ENCODE measurements at regions of chr1 and their contacts with region 1.

Region 1: GRCh38 chr1:94061513-94062443 is 59.2 kb downstream of the ABCA4 start:
- DNase-seq: peak; percentile 51
- H3K4me3 Mint-ChIP-seq: no peak overlapping the region
- H3K27ac Mint-ChIP-seq: no peak overlapping the region
- H3K4me1 Mint-ChIP-seq: no peaks in the 10 kb centered on the region
- H3K27me3 Mint-ChIP-seq: peaks cover 29% of the 10 kb centered on the region

Region 2: DNA sequence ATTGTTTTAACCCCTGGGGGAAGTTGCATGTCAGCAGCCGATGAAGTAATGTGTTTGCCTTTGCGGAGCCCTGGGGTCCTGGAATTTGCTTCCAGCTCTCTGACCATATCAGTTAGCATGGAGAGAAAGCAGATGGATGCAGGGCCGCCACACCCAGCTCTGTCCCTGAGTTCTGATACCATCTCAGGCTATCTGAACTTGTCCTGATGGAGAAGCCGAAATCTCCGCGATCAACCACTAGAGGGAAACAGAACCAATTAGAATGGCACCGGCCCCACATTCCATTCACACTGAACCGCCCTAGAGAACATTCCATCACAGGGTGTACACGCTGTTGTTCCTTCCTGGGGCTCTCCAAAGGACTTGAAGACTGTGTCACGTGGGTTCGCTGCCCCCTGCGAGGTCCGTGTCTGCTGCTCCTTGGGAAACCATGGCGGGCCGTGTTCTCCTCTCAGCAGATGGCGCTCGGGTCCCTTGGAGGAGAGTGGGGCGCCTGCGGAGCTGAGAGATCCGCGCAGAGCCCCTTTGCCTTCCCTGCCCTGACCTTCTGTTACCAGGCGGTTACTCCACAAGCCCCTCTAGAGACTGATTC is 16.2 kb before region 1 on chr1:
- CTCF ChIA-PET with region 1: interaction called, 33 read pairs
- DNase-seq: peak; percentile 55
- H3K4me3 Mint-ChIP-seq: no peak overlapping the region
- H3K27ac Mint-ChIP-seq: no peak overlapping the region
- H3K4me1 Mint-ChIP-seq: peaks cover 6% of the 10 kb centered on the region
- H3K27me3 Mint-ChIP-seq: peaks cover 33% of the 10 kb centered on the region

Region 3: GRCh38 chr1:94072840-94073522 is 11.2 kb after region 1 on chr1:
- CTCF ChIA-PET with region 1: interaction called, 21 read pairs
- DNase-seq: no peak
- H3K4me3 Mint-ChIP-seq: no peak overlapping the region
- H3K27ac Mint-ChIP-seq: no peak overlapping the region
- H3K4me1 Mint-ChIP-seq: peaks cover 13% of the 10 kb centered on the region
- H3K27me3 Mint-ChIP-seq: peaks cover 30% of the 10 kb centered on the region

Region 4: GRCh38 chr1:94111879-94112278 is 50.1 kb after region 1 on chr1:
- CTCF ChIA-PET with region 1: no interaction called
- DNase-seq: no peak
- H3K4me3 Mint-ChIP-seq: no peak overlapping the region
- H3K27ac Mint-ChIP-seq: no peak overlapping the region
- H3K4me1 Mint-ChIP-seq: no peaks in the 10 kb centered on the region
- H3K27me3 Mint-ChIP-seq: peaks cover 25% of the 10 kb centered on the region

Region 5: DNA sequence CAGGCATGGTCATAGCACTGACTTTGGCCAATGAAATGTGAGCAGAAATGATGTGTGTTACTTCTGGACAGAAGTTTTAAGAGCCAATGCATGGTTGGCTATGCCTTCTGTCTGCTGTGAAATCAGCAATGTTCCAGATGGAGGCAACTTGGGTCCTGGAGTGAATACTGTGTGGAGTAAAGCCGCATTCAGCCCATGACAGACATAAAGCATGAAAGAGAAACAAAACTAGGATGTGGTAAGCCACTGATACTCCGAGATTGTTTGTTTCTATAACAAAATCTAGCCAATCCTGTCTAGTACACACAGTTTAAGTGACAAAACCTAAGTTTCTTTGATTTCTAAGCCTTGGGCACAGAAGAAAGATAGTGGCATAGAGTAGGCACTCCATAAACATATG is 222.7 kb after region 1 on chr1:
- CTCF ChIA-PET with region 1: no interaction called
- DNase-seq: no peak
- H3K4me3 Mint-ChIP-seq: no peak overlapping the region
- H3K27ac Mint-ChIP-seq: no peak overlapping the region
- H3K4me1 Mint-ChIP-seq: peaks cover 4% of the 10 kb centered on the region
- H3K27me3 Mint-ChIP-seq: peaks cover 18% of the 10 kb centered on the region

Region 6: GRCh38 chr1:94329986-94330385 is 268.2 kb after region 1 on chr1:
- CTCF ChIA-PET with region 1: interaction called, 64 read pairs
- DNase-seq: no peak
- H3K4me3 Mint-ChIP-seq: no peak overlapping the region
- H3K27ac Mint-ChIP-seq: no peak overlapping the region
- H3K4me1 Mint-ChIP-seq: no peaks in the 10 kb centered on the region
- H3K27me3 Mint-ChIP-seq: peaks cover 42% of the 10 kb centered on the region

Region 7: GRCh38 chr1:94335950-94336349 is 274.2 kb after region 1 on chr1:
- CTCF ChIA-PET with region 1: interaction called, 64 read pairs
- DNase-seq: peak; percentile 43
- H3K4me3 Mint-ChIP-seq: no peak overlapping the region
- H3K27ac Mint-ChIP-seq: peak overlapping the region; percentile 25
- H3K4me1 Mint-ChIP-seq: no peaks in the 10 kb centered on the region
- H3K27me3 Mint-ChIP-seq: peaks cover 47% of the 10 kb centered on the region

Region 8: DNA sequence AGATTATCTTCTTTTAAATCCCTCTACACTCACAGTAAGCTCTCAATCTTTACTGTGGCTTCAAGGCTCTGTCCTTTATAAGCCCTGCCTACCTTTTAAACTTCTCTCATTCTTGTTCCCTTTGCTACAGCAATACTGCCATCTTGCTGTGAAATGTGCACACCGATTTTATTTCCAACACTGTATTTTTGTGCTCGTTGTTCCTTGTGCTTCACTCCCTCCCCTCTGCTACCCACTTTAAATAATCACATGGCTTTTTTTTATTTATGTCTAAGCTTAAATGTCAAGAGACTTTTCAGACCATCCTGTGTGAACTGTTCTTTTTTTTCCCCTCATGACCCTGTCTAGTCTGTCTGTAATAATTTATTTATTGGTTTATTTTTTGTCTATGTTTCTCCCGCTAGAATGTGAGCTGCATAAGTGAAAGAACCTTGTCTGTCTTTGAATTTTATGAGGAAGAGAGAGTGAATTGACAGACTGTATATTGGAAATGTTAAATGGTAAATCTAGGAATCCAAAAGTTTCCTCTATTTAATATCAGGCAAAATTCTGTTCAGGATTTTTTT is 402.1 kb after region 1 on chr1:
- CTCF ChIA-PET with region 1: interaction called, 18 read pairs
- DNase-seq: peak; percentile 23
- H3K4me3 Mint-ChIP-seq: no peak overlapping the region
- H3K27ac Mint-ChIP-seq: peak overlapping the region; percentile 22
- H3K4me1 Mint-ChIP-seq: no peaks in the 10 kb centered on the region
- H3K27me3 Mint-ChIP-seq: no peaks in the 10 kb centered on the region